Heart right ventricle (tissue), 16 donors: ENCODE measurements at regions of chr22 and their contacts with region 1.

Region 1: DNA sequence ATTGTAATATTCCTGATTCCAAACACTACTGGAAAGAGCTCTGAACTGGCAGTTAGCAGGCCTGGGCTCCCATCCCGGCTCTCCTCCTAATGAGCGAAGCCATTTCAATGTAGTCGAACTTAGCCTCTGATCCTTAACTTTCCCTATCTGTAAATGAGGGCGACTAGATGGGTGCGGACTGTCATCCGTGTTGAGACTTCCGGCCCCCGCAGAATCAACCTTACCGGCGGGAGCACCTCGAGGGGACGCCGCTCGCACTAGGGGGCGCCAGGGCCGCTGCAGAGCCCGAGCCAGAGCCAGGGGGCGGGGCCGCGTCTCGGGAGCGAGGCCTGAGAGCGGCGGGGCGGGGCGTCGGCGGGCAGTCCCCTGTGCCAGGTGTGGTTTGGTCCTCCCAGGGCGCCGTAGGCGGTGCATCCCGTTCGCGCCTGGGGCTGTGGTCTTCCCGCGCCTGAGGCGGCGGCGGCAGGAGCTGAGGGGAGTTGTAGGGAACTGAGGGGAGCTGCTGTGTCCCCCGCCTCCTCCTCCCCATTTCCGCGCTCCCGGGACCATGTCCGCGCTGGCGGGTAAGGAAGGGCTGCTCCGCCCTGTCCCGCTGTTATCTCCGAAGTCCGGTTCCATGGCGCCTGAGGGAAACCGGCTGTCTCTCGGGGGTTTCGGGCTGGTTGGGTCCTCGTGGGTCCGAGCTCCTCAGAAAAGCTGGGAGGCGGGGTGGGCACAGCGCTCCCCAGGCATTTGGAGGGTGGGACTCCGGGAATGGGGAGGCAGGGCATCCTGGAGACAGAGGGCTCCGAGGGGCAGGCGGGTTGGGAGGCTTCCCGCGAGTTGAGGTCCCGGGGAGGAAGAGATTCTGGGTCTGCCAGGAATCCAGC is at the start of gene LIMK2:
- DNase-seq: peak; percentile 94 to 96
- ATAC-seq: peak; percentile 93 to 97 (median 95)
- H3K4me3 ChIP-seq: peak within 1 kb of the TSS; percentile 70 to 95 (median 82)
- H3K27ac ChIP-seq: peak within 1 kb of the TSS; percentile 76 to 98 (median 88)
- H3K4me1 ChIP-seq: peaks cover 8 to 70% (median 46%) of the 10 kb centered on the region in 9 donors
- H3K27me3 ChIP-seq: no peaks in the 10 kb centered on the region
- CTCF ChIP-seq: peak; percentile 74 to 98 (median 87)
- total RNA-seq, gene LIMK2: 6.5 to 18.8 (median 9.7) TPM

Region 2: GRCh38 chr22:31075961-31076360 is 136.1 kb before region 1 on chr22:
- intact Hi-C with region 1: no loop called
- DNase-seq: peak; percentile 91 to 93
- ATAC-seq: peak; percentile 83 to 94 (median 92)
- H3K4me3 ChIP-seq: peak overlapping the region in 1 of 10 donors; percentile 14
- H3K27ac ChIP-seq: peak overlapping the region; percentile 24 to 92 (median 81)
- H3K4me1 ChIP-seq: peaks cover 10 to 44% (median 18%) of the 10 kb centered on the region in 9 donors
- H3K27me3 ChIP-seq: no peaks in the 10 kb centered on the region
- CTCF ChIP-seq: no peak

Region 3: DNA sequence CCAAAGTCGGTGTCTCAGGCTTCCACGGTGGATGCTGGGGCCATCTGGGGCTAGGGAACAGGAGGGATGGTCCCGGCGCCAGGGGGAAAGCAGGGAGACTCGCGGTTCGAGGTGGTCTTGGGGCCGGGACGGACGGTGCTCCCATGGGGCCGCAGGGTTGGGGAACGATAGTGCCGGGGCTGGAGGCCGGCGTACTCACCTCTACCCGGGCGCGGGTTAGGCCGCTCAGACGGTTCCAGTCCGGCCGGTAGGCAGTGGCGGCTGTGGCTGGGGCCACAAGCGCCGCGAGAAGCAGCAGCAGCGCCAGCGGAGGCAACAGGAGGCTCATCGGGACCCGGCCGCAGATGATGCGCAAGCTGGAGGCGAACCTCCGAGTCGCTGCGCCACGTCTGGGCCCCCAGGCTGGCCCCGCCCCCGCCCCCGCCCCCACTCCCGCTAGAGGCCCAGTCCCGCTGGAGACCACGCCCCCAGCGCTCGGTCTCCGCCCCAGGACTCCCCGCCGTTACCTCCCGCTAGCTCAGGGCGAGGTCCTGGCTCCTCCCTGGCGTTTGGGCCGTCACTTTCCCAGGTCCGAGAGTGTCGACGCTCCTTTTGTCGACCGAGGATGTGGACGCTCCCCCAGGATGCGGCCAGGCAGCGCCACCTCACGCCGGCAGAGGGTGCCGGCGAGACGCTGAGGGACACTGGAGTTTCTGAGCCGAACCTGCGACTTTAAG is 104.8 kb before region 1 on chr22 and contains the start of gene SELENOM:
- intact Hi-C with region 1: loop called in 2 of 10 experiments (anchors 5 to 10 kb)
- DNase-seq: peak; percentile 97 to 98
- ATAC-seq: peak; percentile 92 to 96 (median 94)
- H3K4me3 ChIP-seq: peak within 1 kb of the TSS; percentile 54 to 90 (median 80)
- H3K27ac ChIP-seq: peak within 1 kb of the TSS; percentile 55 to 96 (median 94)
- H3K4me1 ChIP-seq: peaks cover 0 to 45% (median 24%) of the 10 kb centered on the region in 9 donors
- H3K27me3 ChIP-seq: no peaks in the 10 kb centered on the region
- CTCF ChIP-seq: peak; percentile 91 to 99 (median 93)
- total RNA-seq, gene SELENOM: 21.5 to 73.9 (median 45.3) TPM

Region 4: DNA sequence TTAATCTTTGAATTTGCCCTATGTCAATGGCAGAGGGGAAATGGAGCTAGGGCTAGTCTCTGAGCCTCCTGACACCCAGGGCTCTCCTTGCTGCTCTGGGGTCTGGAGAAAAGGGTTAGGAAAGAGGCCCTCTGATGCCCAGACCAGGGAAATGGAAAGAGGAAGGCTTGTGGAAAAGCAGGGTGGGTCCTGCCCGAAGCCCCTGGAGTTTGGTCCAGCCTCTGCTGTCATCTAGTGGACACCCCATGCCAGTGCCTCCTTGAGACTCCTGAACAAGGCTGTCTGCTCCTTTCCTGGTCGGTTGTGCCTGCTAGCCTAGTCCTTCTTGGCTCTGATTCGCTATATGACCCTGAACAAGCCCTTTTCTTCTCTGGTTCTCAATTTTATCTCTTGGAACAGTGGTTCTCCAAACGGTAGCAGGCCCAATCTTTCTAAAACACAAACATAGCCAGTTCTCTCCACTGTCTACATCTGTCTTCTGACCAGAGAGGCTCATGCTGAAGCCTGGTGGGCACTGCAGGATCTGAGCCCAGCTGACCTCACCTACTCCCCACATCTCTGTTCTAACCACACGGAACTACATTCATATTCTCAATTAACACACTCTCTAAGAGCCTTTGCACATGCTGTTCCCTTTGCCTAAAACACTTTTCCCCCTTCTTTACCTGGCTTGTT is 63.0 kb before region 1 on chr22:
- intact Hi-C with region 1: no loop called
- DNase-seq: peak; percentile 72 to 84
- ATAC-seq: peak; percentile 92 to 99 (median 96)
- H3K4me3 ChIP-seq: no peak overlapping the region
- H3K27ac ChIP-seq: peak overlapping the region; percentile 2 to 82 (median 77)
- H3K4me1 ChIP-seq: peaks cover 0 to 20% (median 12%) of the 10 kb centered on the region in 9 donors
- H3K27me3 ChIP-seq: no peaks in the 10 kb centered on the region
- CTCF ChIP-seq: peak in 8 of 9 donors; percentile 83 to 97 (median 92)

Region 5: GRCh38 chr22:31230871-31231621 is 18.9 kb after region 1 on chr22:
- intact Hi-C with region 1: loop called in 1 of 10 experiments (anchors 2 kb)
- DNase-seq: peak in 1 of 2 donors; percentile 57
- ATAC-seq: peak; percentile 65 to 84 (median 78)
- H3K4me3 ChIP-seq: no peak overlapping the region
- H3K27ac ChIP-seq: peak overlapping the region in 9 of 10 donors; percentile 71 to 94 (median 77)
- H3K4me1 ChIP-seq: peaks cover 7 to 100% (median 56%) of the 10 kb centered on the region in 9 donors
- H3K27me3 ChIP-seq: no peaks in the 10 kb centered on the region
- CTCF ChIP-seq: peak; percentile 44 to 85 (median 74)

Region 6: DNA sequence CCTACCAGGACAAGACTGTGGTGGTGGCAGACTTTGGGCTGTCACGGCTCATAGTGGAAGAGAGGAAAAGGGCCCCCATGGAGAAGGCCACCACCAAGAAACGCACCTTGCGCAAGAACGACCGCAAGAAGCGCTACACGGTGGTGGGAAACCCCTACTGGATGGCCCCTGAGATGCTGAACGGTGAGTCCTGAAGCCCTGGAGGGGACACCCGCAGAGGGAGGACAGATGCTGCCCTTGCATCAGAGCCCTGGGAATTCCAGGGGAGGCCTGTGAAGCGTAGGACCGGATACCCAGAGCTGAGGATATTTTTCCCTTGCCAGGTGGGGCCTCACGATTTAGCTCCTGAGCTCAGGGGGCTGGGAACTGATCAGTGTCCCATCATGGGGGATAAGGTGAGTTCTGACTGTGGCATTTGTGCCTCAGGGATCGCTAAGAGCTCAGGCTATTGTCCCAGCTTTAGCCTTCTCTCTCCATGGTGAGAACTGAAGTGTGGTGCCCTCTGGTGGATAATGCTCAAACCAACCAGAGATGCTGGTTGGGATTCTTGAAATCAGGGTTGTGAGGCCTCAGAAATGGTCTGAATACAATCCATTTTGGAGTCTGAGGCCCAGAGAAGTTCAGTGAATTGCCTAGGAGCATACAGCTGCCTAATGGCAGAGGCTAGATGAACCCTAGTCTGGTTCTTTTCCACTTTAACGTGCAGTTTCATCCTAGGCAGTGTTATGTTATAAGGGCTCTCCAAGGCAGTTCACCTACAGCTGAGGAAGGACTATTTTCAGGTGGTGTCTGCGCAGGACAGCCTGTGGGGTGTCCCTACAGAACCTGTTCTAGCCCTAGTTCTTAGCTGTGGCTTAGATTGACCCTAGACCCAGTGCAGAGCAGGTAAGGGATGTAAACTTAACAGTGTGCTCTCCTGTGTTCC is 60.7 kb after region 1 on chr22:
- intact Hi-C with region 1: loop called in 7 of 10 experiments (anchors 5 to 10 kb)
- DNase-seq: peak in 1 of 2 donors; percentile 64
- ATAC-seq: peak; percentile 57 to 85 (median 76)
- H3K4me3 ChIP-seq: no peak overlapping the region
- H3K27ac ChIP-seq: peak overlapping the region in 2 of 10 donors; percentile 7 to 41
- H3K4me1 ChIP-seq: peaks cover 0 to 16% (median 4%) of the 10 kb centered on the region in 9 donors
- H3K27me3 ChIP-seq: no peaks in the 10 kb centered on the region
- CTCF ChIP-seq: peak; percentile 53 to 81 (median 76)